ACHN (cell line): ENCODE measurements at regions of chr12 and their contacts with region 1.

Region 1: DNA sequence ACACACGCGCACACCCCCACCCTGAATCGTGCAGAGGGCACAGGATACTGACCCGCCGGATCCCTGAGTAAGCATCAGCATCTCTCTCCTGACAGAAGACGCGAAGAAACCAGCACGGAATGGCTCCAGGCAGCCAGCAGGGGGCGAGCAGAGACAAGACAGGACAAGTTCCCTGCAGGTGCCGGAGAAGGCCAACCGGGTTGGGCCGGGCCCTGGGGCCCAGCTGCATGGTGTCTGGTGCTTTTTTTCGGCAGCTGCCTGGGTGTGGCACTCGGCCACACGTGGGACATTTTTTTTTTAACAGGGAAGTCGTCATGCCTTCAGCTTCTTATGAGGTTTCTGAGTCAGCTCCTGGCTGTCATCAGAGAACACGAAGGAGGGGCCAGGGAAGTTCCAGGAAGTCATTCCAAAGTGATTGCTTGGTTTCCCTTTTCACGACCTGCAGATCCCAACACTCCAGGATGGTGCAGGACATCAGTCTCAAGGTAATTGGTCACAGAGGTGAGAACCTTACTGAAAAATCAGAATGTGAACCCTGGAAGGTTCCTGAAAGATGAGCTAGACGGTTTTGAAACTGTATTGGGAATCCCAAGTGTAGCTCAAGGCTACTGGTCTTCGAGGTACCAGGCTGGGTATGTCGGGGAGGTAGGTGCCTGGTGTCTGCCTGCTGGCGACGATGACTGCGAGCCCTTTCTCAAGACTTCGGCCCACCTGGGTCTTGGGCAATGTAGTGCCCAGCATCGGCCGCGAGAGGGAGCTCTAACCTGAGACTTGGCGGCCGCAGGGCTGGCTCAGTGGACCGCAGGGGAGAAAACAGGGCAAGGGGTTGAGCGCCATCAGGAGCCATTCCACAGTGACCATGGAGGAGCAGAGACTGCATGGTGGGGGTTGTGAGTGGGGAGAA is 190.8 kb upstream of the PRMT8 start:
- DNase-seq: peak; percentile 96

Region 2: DNA sequence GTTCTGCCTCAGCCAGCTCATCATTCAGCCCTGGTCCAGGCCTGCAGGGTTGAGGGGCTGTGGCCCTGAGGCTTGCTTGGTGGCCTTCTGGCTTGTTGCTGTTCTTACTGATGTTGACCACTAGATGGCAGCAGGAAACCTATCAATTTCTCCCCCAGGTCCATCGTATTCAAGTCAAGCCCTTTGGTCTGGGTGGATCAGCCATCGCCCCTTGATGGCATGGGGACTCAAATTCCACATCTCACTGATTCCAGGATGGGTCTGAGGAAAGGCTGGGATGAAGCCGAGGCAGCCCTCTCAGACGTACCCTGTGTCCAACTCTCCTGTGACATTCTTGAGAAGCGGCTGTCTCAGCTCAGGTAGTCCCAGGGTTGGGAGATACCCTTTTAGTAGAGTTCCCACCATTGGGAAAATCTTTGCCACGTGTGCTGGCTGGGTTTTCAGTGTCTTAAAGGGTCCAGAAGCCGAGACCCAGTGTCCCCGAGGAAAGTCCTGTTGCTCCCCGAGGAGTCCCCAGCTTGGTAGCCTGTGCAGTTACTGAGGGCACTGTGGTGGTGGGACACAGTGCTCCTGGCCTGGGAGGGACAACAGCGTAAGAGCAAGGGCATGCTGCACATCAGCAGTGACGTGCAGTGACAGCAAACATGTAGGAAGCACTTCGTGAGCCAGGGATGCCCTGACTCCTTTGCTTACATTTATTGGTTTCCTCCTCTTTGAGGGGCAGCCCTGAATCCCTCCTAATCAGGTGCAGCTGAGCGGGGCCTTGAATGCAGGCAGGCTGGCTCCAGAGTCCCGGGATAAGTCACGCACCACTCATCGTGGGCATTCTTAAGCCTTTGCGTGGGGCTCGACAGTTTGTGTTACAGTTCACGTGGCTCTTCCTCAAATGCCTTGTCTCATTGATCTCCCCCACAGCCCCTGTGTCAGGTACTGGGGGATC is 164.4 kb before region 1 on chr12:
- in situ Hi-C with region 1: loop called (anchors 25 kb)
- DNase-seq: peak; percentile 78

Region 3: DNA sequence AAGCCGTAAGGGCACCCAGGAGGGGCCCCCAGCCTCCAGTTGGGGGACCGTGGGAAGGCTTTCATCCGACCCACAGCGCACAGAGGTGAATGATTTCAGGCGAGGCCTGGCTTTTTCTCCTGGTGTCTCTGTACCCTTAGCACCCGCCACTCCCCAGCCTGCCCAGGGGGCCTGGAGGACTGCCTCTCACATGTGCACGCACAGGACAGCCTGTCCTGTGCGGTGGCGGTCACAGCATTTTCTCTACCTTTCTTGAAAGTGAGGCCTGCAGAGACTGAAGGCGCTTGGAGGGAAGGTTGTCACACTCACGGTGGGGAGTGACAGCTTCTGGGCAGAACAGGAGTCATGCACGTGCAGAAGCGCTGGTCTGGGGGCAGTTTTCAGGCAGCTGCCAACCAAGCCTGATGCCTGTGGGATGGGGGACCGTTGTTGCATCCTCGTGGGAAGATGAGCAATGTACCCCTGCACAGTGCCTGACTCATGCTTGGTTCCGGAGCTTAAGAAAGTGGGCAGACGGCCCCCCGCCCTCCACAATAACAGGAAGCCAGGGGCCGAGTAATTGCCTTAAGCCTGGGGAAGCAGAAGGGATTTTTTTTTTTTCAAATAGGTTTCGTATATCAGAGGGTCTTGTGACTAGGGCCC is 74.9 kb before region 1 on chr12:
- in situ Hi-C with region 1: no loop called
- DNase-seq: no peak

Region 4: GRCh38 chr12:3456809-3457208 is 156.6 kb after region 1 on chr12:
- in situ Hi-C with region 1: no loop called
- DNase-seq: no peak

Region 5: GRCh38 chr12:3803865-3804472 is 503.8 kb after region 1 on chr12:
- in situ Hi-C with region 1: loop called (anchors 25 kb)
- DNase-seq: peak; percentile 75